Lower lobe of right lung (tissue), 2 donors: ENCODE measurements at regions of chr22 and their contacts with region 1.

Region 1: DNA sequence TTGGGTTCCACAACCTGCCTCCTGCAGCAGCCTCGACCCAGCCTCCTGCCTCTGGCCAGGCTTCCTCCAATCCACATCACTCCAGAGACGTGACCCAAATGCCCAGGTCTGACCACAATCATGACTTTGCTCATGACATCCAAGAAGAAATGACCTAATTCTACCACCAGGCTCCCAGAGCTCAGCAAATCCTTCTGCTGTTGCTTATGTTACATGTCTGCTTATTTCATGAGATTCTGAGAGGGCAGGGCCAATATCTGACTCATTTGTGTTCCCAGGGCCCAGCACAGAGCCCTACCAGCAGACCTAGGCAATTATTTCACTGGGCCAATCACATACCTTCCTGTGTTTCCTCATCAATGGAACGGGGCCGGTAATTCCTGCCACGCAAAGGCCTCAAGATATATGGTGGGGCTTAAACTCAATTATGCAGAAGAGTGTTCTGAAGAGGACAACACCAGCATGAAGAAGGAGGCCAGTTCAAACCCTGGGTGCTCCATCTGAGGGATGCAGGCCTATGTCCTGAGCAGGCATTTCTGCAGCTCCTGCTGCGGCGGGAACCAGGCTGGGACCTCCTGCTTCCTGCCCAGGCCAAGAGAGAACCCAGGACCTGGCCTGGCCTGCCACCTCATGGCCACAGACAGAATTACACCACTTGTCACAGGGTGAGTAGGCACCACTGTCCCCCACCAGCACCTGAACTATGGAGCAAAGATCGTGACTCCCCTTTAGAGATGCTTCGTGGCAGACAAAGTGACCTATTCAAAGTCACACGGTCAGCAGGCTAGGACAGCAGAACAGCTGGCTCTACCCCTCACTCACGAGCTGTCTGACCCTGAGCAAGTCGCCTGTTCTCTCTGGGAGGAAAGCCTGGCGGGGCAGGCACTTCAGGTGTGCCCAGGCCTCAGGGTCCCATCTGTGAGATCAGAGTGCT is 5.9 kb downstream of the CENPM start:
- DNase-seq: peak; percentile 86
- ATAC-seq: peak; percentile 92 to 93
- H3K4me3 ChIP-seq: no peak overlapping the region
- H3K27ac ChIP-seq: peak overlapping the region; percentile 70
- H3K4me1 ChIP-seq: peaks cover 20% of the 10 kb centered on the region
- H3K27me3 ChIP-seq: no peaks in the 10 kb centered on the region
- CTCF ChIP-seq: peak; percentile 93

Region 2: GRCh38 chr22:41517172-41518047 is 423.7 kb before region 1 on chr22:
- intact Hi-C with region 1: no loop called
- DNase-seq: no peak
- ATAC-seq: peak; percentile 47 to 68
- H3K4me3 ChIP-seq: no peak overlapping the region
- H3K27ac ChIP-seq: no peak overlapping the region
- H3K4me1 ChIP-seq: peaks cover 5% of the 10 kb centered on the region
- H3K27me3 ChIP-seq: no peaks in the 10 kb centered on the region
- CTCF ChIP-seq: peak; percentile 85

Region 3: GRCh38 chr22:41697126-41697775 is 243.8 kb before region 1 on chr22:
- intact Hi-C with region 1: loop called (anchors 5 kb)
- DNase-seq: peak; percentile 95
- ATAC-seq: peak; percentile 86 to 89
- H3K4me3 ChIP-seq: peak overlapping the region; percentile 46
- H3K27ac ChIP-seq: peak overlapping the region; percentile 72
- H3K4me1 ChIP-seq: peaks cover 19% of the 10 kb centered on the region
- H3K27me3 ChIP-seq: no peaks in the 10 kb centered on the region
- CTCF ChIP-seq: peak; percentile 99